ENCODE measurements at regions of chr4 and their contacts with region 1.

Region 1: DNA sequence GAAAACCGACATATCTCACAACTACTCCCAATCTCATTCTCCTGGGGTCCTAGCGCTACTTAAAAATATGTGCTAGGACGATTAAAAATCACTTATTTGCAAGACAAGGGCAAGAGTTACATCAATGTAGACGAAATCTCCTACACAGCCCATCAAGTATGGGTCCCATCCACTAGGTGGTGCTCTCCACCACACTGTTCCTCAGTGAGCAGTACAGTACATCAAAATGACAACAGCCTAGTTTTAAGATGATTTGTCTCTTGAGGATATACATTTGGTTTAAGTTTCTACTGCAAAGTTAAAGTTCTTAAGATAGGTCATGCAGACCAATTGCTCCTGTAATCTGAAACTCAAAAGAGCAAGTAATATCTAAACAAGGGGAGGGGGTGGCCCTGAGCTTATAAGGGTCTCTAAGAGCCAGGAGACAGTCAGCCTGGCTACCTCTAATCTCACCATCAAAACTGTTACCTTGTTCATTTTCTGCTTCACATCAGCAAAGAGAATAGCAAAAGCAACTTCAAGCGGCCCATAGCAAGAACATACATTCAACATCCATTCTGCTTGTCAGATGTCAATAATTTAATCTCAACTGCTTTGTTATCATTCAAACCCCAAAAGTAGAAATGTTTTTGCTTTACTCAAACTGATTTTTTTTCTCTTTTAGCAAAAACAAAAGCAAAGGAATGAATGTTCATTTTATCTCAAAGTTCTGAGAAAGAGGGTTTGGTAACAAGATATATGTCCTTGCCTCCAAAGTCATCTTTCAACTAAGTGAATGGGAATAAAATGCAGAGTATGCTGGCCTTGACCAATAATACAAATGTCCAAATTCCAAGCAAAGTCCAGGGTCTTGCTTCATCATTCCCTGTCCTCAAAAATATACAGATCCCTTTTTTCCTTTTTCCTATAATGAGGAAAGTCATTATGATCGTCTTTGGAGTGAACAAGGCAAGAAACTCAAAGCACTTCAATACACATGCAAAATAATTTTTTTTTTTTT is 53.1 kb downstream of the STX18 start:
- DNase-seq: peak; percentile 54
- H3K4me3 ChIP-seq: no peak overlapping the region
- H3K27ac ChIP-seq: no peak overlapping the region
- H3K4me1 ChIP-seq: no peaks in the 10 kb centered on the region
- H3K27me3 ChIP-seq: no peaks in the 10 kb centered on the region
- CTCF ChIP-seq: peak; percentile 92 to 94

Region 2: GRCh38 chr4:4248029-4248884 is 240.4 kb before region 1 on chr4 and contains the start of gene TMEM128:
- CTCF ChIA-PET with region 1: no interaction called
- dilution Hi-C with region 1: no loop called
- in situ Hi-C with region 1: no loop called
- intact Hi-C with region 1: no loop called
- DNase-seq: peak; percentile 92
- H3K4me3 ChIP-seq: peak within 1 kb of the TSS; percentile 75 to 97 (median 97)
- H3K27ac ChIP-seq: peak within 1 kb of the TSS; percentile 87
- H3K4me1 ChIP-seq: peaks cover 17% of the 10 kb centered on the region
- H3K27me3 ChIP-seq: no peaks in the 10 kb centered on the region
- CTCF ChIP-seq: peak in 1 of 2 donors; percentile 32
- total RNA-seq, gene TMEM128: 20.3 to 28.8 TPM

Region 3: GRCh38 chr4:4440333-4441061 is 48.2 kb before region 1 on chr4:
- CTCF ChIA-PET with region 1: no interaction called
- dilution Hi-C with region 1: no loop called
- in situ Hi-C with region 1: no loop called
- intact Hi-C with region 1: no loop called
- DNase-seq: peak; percentile 36
- H3K4me3 ChIP-seq: no peak overlapping the region
- H3K27ac ChIP-seq: no peak overlapping the region
- H3K4me1 ChIP-seq: peaks cover 10% of the 10 kb centered on the region
- H3K27me3 ChIP-seq: no peaks in the 10 kb centered on the region
- CTCF ChIP-seq: no peak

Region 4: DNA sequence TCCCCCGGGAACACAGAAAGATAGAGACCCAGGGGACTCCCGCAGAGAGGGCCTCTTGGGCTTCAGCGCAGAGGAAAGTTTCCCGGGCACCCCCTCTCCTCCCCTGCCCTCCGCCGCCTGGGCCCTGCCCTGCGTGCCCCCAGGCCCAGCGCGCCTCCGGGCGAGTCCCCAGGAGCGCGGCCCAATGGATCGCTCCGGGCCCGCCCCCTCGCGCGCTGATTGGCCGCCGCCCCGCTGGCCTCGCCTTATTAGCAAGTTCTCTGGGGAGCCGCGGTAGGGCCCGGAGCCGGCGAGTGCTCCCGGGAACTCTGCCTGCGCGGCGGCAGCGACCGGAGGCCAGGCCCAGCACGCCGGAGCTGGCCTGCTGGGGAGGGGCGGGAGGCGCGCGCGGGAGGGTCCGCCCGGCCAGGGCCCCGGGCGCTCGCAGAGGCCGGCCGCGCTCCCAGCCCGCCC is 370.7 kb after region 1 on chr4 and contains the start of gene MSX1:
- CTCF ChIA-PET with region 1: no interaction called
- dilution Hi-C with region 1: no loop called
- in situ Hi-C with region 1: loop called in 1 of 2 experiments (anchors 25 kb)
- intact Hi-C with region 1: no loop called
- DNase-seq: peak; percentile 82
- H3K4me3 ChIP-seq: peak within 1 kb of the TSS; percentile 33 to 42 (median 40)
- H3K27ac ChIP-seq: no peak within 1 kb of the TSS
- H3K4me1 ChIP-seq: peaks cover 8% of the 10 kb centered on the region
- H3K27me3 ChIP-seq: peaks cover 58% of the 10 kb centered on the region
- CTCF ChIP-seq: no peak
- total RNA-seq, gene MSX1: 0.67 to 2.6 TPM

Region 5: DNA sequence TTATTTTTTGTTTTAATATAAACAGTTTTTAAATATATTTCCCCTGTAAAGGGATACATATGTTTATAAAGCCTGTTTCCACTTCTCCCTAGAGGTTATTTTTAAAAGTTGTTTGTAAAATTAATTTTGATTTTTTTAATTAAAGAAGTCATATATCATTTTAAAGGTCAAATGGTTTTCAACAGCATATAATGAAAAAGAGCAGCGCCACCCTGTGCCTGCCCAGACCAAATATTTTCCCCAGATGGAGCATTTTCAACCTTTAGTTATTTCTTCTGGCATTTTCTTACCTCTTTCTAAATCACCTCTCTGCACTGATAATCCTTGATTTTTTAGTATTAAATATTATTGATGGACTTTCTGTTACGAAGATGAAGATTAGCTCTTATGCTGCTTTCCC is 391.8 kb after region 1 on chr4:
- CTCF ChIA-PET with region 1: interaction called, 3 read pairs
- dilution Hi-C with region 1: no loop called
- in situ Hi-C with region 1: loop called in 1 of 2 experiments (anchors 10 kb)
- intact Hi-C with region 1: loop called (anchors 1 kb)
- DNase-seq: no peak
- H3K4me3 ChIP-seq: no peak overlapping the region
- H3K27ac ChIP-seq: no peak overlapping the region
- H3K4me1 ChIP-seq: no peaks in the 10 kb centered on the region
- H3K27me3 ChIP-seq: no peaks in the 10 kb centered on the region
- CTCF ChIP-seq: peak in 1 of 2 donors; percentile 44

Region 6: DNA sequence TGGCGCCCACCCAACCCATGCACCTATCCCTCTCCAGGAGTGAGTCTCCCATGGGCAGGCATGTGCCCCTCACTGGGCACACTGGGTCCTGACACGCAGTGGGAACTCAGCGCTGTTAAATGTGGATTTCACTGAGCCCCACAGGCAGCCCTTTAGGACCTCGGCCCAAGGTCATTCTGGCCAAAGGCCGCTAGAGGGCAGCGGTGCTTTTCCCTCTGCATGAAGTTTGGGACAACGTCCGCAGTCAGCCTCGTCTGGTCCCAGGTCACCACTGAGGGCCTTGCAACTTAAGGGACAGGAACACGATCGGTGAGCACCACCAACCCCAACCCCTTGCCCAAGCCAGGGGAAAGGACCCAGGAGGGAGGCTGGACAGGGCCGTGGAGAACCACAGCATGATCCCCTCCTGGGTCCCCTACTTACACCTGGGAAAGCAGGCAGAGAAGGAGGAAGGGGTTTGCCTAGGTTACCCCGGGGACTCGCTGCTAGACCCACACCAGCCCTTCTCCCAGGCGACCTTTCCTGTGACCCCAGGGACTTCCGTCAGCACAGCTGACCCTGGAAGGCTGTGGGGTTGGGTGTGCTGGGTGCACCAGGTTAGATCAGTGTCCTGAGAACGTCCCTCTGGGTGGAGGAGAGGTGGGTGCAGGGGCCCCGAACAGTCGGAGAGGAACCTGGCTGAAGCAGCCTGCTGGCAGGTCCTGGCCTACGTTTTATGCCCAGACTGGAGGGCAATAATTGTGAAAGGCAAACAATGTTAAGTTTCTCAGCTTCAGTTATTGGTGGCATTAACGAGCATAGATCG is 506.6 kb after region 1 on chr4:
- CTCF ChIA-PET with region 1: no interaction called
- dilution Hi-C with region 1: no loop called
- in situ Hi-C with region 1: loop called in 1 of 2 experiments (anchors 25 kb)
- intact Hi-C with region 1: loop called (anchors 1 kb)
- DNase-seq: peak; percentile 42
- H3K4me3 ChIP-seq: no peak overlapping the region
- H3K27ac ChIP-seq: no peak overlapping the region
- H3K4me1 ChIP-seq: no peaks in the 10 kb centered on the region
- H3K27me3 ChIP-seq: peaks cover 2% of the 10 kb centered on the region
- CTCF ChIP-seq: peak; percentile 89 to 95

Region 7: DNA sequence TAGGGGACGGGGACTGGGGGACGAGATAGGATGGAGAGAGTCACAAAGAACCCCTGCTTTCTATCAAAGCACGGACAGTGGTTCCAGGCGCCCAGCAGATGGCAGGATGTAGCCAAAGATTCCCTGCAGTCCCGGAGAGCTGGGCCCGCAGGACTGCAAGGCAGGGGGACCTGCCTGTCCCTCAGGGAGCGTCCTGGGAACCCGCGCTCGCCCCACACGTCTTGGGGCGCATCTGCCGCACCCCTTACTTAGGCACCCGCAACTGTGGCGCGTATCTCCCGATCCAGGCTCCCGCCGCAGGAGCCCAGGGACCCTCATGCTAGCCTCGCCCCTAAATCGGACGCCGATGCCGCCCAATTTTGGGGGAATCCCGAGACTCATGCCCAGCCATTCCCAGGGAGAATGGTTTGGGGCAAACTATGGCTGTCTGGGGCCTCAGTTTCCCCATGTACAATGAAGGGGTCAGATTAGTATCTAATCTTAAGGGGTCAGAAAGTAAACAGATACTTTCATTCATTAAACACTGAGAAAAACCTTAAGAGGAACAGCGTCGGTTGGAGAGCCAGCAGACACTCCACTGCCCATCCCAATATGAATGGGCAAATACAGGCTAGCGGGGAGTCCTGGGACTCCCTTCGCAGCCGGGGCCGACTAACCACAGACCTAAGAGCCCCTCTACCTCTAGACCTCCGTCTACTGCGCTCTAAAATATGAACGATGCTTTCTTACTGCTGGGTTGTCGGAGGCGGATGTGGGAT is 562.0 kb after region 1 on chr4:
- CTCF ChIA-PET with region 1: no interaction called
- dilution Hi-C with region 1: no loop called
- in situ Hi-C with region 1: no loop called
- intact Hi-C with region 1: loop called (anchors 1 kb)
- DNase-seq: peak; percentile 63
- H3K4me3 ChIP-seq: peak overlapping the region; percentile 46 to 59 (median 53)
- H3K27ac ChIP-seq: no peak overlapping the region
- H3K4me1 ChIP-seq: peaks cover 12% of the 10 kb centered on the region
- H3K27me3 ChIP-seq: no peaks in the 10 kb centered on the region
- CTCF ChIP-seq: peak; percentile 59 to 81

Measured in mammary epithelial cell (primary cell).